PC-3 (cell line): ENCODE measurements at regions of chr7 and their contacts with region 1.

Region 1: DNA sequence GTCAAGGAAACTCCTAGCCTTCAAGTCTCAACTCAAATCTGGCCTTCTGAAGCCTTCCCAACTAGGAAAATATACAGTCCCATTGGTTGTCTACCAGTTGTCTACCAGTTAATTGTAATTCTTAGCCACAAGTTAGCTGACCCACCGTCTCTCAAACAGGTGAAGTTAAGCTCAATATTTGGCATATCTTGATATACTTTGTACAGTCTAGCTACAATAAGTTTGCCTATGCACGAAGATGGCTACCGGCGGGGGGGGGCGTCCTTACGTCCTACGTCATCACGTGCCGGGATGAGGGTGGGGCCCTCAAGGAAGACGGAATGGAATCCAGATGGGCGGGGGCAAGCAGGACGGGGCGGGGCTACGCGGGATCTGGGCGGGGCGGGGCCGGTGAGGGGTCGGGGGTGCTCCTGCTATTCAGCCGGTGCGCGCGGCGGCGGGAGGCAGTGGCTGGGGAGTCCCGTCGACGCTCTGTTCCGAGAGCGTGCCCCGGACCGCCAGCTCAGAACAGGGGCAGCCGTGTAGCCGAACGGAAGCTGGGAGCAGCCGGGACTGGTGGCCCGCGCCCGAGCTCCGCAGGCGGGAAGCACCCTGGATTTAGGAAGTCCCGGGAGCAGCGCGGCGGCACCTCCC is at the start of gene AHR:
- DNase-seq: peak; percentile 89
- ATAC-seq: peak; percentile 72
- H3K4me3 ChIP-seq: peak within 1 kb of the TSS; percentile 94
- H3K27ac ChIP-seq: peak within 1 kb of the TSS; percentile 75
- H3K4me1 ChIP-seq: peaks cover 17% of the 10 kb centered on the region
- H3K27me3 ChIP-seq: no peaks in the 10 kb centered on the region
- CTCF ChIP-seq: no peak
- total RNA-seq, gene AHR: 62.5 and 72.7 TPM in 2 replicates

Region 2: DNA sequence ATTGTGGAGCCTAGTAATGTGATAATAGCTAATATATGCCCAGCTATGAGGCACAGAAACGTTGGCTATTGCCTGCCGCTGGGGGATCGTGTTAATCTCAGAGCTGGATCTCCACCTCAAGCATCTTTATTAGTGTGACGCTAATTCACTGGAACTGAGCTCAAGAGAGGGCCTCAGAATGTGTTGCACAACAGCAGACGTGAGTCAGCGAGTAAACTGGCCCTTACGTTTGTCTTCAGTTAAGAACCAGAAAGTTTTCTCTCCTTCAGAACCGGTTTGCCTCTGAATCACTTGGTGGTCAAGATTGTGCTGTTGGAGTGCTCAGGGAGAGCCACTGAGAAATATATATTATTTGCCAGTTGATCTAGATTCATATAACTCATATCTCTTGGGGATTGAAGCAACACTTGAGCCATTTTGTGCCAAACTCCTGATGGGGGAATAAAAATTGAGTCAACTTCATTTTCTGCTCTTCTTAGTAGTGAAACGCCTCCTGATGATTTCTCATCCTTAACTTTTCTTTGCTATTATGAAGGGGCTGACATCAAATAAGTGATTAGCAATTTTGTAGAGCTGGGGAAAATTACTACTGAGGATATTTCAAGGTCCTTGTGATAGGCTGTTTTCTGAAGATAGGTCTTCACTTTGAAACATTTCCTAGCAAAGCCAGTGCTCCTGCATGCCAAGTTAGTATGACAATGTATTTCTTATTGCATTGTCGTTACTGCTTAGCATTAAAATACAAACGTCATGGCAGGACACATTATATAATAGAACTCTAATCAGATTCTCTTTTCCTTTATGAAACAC is 630.1 kb before region 1 on chr7:
- CTCF ChIA-PET with region 1: no interaction called
- POLR2A ChIA-PET with region 1: interaction called, 15 read pairs
- intact Hi-C with region 1: no loop called
- DNase-seq: peak; percentile 99
- ATAC-seq: peak; percentile 97
- H3K4me3 ChIP-seq: peak overlapping the region; percentile 33
- H3K27ac ChIP-seq: peak overlapping the region; percentile 96
- H3K4me1 ChIP-seq: peaks cover 35% of the 10 kb centered on the region
- H3K27me3 ChIP-seq: no peaks in the 10 kb centered on the region
- CTCF ChIP-seq: no peak; the same call in 1 of the 2 replicates

Region 3: GRCh38 chr7:16926283-16926682 is 372.0 kb before region 1 on chr7:
- CTCF ChIA-PET with region 1: interaction called, 4 read pairs
- POLR2A ChIA-PET with region 1: interaction called, 6 read pairs
- intact Hi-C with region 1: loop called (anchors 2 kb)
- DNase-seq: peak; percentile 78
- ATAC-seq: peak; percentile 57
- H3K4me3 ChIP-seq: 0 out of 2 replicates have a peak overlapping the region, but pooled peaks have one; percentile 19
- H3K27ac ChIP-seq: peak overlapping the region; percentile 87
- H3K4me1 ChIP-seq: peaks cover 64% of the 10 kb centered on the region
- H3K27me3 ChIP-seq: no peaks in the 10 kb centered on the region
- CTCF ChIP-seq: peak; percentile 83

Region 4: DNA sequence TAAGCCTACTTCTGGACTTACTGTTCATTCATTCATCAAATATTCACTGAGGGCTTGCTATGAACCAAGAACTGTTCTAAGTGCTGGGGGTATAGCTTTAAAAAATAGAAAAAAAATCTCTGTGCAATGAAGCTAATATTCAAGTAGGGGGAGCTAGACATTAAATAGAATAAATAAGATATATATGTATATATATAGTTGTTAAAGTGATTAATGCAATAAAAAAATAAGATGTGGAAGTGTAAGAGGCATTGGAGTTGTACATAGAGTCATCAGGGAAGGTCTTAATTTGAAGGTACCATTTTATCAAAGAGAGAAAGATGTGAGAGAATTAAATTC is 235.3 kb before region 1 on chr7:
- CTCF ChIA-PET with region 1: interaction called, 4 read pairs
- POLR2A ChIA-PET with region 1: interaction called, 11 read pairs
- intact Hi-C with region 1: loop called (anchors 2 kb)
- DNase-seq: peak; percentile 48
- ATAC-seq: 0 out of 2 replicates have a peak, but pooled peaks have one; percentile 8
- H3K4me3 ChIP-seq: no peak overlapping the region
- H3K27ac ChIP-seq: 0 out of 2 replicates have a peak overlapping the region, but pooled peaks have one; percentile 1
- H3K4me1 ChIP-seq: peaks cover 47% of the 10 kb centered on the region
- H3K27me3 ChIP-seq: no peaks in the 10 kb centered on the region
- CTCF ChIP-seq: peak; percentile 36; the same call in 1 of the 2 replicates

Region 5: GRCh38 chr7:17176371-17177032 is 121.8 kb before region 1 on chr7:
- CTCF ChIA-PET with region 1: no interaction called
- POLR2A ChIA-PET with region 1: interaction called, 16 read pairs
- intact Hi-C with region 1: no loop called
- DNase-seq: no peak
- ATAC-seq: no peak
- H3K4me3 ChIP-seq: no peak overlapping the region
- H3K27ac ChIP-seq: no peak overlapping the region
- H3K4me1 ChIP-seq: peaks cover 14% of the 10 kb centered on the region; the same call in 1 of the 2 replicates
- H3K27me3 ChIP-seq: no peaks in the 10 kb centered on the region
- CTCF ChIP-seq: no peak

Region 6: DNA sequence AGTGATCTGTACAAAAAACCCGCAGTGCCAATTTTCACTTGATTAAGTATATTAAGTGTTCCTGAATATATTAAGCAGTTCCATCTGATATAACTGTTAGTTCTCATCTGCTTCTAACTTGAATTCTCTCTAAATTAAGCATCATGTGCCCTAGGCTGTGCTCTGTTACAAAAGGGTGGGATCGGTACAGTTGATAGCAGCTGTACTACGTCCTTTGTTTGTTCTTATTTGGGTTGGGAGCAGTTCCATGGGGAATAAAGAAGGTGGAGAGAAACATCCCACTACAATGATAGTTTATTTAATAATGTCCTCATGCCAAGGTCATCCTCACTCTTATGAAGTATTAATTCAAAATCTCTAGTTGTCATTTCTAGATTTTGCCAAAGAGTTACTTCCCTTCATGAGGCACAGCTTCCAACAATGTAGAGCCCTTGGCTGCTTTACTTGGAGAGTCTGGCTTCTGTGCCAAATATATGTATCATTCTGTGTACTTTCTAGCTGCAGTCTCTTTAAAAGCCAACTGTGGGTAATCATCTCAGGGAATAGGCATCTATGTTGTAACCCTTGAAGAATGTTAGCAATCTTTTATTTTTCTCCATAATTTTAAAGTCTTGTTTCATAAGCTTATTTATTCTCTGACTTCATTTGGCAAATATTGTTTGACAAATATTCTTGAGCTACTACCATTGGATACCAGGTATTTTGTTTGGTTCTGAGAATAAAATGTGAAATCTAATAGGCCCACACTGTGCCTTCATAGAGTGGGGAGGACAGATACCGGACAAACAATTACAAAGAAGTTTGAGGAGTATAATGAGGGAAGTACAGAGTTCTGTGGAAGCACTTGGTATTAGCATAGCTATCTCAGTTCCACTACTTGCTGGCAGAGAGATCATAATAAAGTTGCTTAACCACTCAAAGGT is 22.3 kb before region 1 on chr7:
- CTCF ChIA-PET with region 1: interaction called, 8 read pairs
- POLR2A ChIA-PET with region 1: interaction called, 40 read pairs
- intact Hi-C with region 1: loop called (anchors 1 kb)
- DNase-seq: peak; percentile 92
- ATAC-seq: peak; percentile 91
- H3K4me3 ChIP-seq: peak overlapping the region; percentile 8; the same call in 1 of the 2 replicates
- H3K27ac ChIP-seq: peak overlapping the region; percentile 78
- H3K4me1 ChIP-seq: peaks cover 34% of the 10 kb centered on the region
- H3K27me3 ChIP-seq: no peaks in the 10 kb centered on the region
- CTCF ChIP-seq: no peak

Region 7: DNA sequence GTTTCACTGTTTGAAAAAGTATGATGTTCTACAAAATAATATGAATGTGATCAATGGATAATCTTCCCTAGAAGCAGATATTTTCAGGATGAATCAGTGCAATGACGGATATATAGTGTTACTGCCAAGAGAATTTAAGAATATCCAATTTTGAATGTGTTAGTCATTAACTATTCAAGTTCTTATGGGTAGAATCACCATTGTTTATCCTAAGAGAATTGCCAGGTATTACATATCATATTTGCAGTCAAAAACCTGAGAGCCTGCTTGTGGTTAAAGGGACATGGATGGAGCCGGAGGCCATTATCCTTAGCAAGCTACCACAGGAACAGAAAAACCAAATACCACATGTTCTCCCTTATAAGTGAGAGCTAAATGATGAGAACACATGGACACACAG is 27.0 kb after region 1 on chr7:
- CTCF ChIA-PET with region 1: no interaction called
- POLR2A ChIA-PET with region 1: no interaction called
- intact Hi-C with region 1: no loop called
- DNase-seq: peak; percentile 89
- ATAC-seq: peak; percentile 76
- H3K4me3 ChIP-seq: no peak overlapping the region
- H3K27ac ChIP-seq: peak overlapping the region; percentile 67
- H3K4me1 ChIP-seq: peaks cover 23% of the 10 kb centered on the region
- H3K27me3 ChIP-seq: no peaks in the 10 kb centered on the region
- CTCF ChIP-seq: no peak